Colonic mucosa (tissue), 4 donors: ENCODE measurements at regions of chr4 and their contacts with region 1.

Region 1: GRCh38 chr4:155602351-155603140 is 64.1 kb upstream of the GUCY1A1 start:
- DNase-seq: no peak
- H3K4me3 ChIP-seq: no peak overlapping the region
- H3K27ac ChIP-seq: no peak overlapping the region
- H3K4me1 ChIP-seq: no peaks in the 10 kb centered on the region
- H3K27me3 ChIP-seq: no peaks in the 10 kb centered on the region
- CTCF ChIP-seq: no peak

Region 2: DNA sequence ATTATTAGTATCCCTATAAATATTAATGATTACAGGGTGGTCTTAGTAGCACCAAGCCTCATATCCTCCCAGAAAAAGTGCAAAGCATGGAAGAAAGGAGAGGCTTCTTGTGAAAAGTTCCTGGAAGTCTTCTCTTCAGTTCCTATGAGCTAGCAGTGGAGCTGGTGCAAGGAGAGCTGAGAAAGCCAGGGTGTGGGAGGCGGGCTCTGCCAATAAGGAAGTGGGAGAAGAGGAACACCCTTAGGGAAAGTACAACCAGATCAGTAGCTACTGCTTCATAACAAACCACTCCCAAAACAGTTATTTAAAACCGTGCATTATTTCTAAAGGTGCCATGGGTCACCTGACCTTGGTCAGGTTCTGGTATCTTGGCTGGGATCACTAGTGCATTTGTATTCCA is 298.2 kb before region 1 on chr4:
- intact Hi-C with region 1: no loop called
- DNase-seq: peak; percentile 57
- H3K4me3 ChIP-seq: no peak overlapping the region
- H3K27ac ChIP-seq: peak overlapping the region; percentile 63
- H3K4me1 ChIP-seq: peaks cover 4% of the 10 kb centered on the region
- H3K27me3 ChIP-seq: no peaks in the 10 kb centered on the region
- CTCF ChIP-seq: no peak

Region 3: GRCh38 chr4:155572106-155572703 is 30.3 kb before region 1 on chr4:
- intact Hi-C with region 1: loop called (anchors 2 kb)
- DNase-seq: no peak
- H3K4me3 ChIP-seq: no peak overlapping the region
- H3K27ac ChIP-seq: no peak overlapping the region
- H3K4me1 ChIP-seq: no peaks in the 10 kb centered on the region
- H3K27me3 ChIP-seq: no peaks in the 10 kb centered on the region
- CTCF ChIP-seq: no peak